ENCODE measurements at regions of chr11 and their contacts with region 1.

Region 1: DNA sequence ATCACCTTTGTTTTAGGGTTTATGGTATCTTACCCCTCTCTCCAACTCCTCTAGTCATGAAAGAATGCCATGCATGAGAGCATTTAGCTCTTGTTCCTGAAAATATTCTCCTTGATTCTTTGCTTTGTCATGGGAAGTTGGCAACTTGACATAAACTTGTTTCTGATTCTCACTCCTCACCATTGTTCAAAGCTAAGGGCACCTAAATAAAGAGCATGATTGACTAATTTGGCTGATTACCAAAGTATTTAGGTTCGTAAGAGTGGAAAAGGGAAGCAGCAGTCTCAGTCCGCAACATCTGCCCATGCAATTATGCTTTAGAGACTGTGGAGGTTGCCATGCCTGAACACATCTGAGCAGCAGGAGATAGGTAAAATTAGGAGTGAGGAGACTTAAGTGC is 26.4 kb downstream of the OR52K1 start:
- DNase-seq: no peak
- CTCF ChIP-seq: no peak

Region 2: GRCh38 chr11:4496557-4497275 is 12.2 kb before region 1 on chr11:
- CTCF ChIA-PET with region 1: interaction called, 19 read pairs
- POLR2A ChIA-PET with region 1: no interaction called
- DNase-seq: no peak
- CTCF ChIP-seq: no peak

Region 3: GRCh38 chr11:4531676-4532075 is 22.8 kb after region 1 on chr11:
- CTCF ChIA-PET with region 1: no interaction called
- POLR2A ChIA-PET with region 1: no interaction called
- DNase-seq: no peak
- CTCF ChIP-seq: no peak